Activated T-helper 1 cell treated with anti-CD3 and anti-CD28 coated beads, Interleukin-12 subunit alpha, Interleukin-12 subunit beta, Interleukin-2, Interleukin-4 antibody, amounts not matched to agents 30 ng/mL and 10 ng/mL and 1 ng/mL, durations not matched to agents 14 hours and 24 hours and 36 hours (primary cell): ENCODE measurements at regions of chr9 and their contacts with region 1.

Region 1: GRCh38 chr9:126965541-126966428 is 51.2 kb downstream of the RALGPS1 start:
- DNase-seq: peak; percentile 21
- H3K4me3 Mint-ChIP-seq: no peak overlapping the region
- H3K27ac Mint-ChIP-seq: no peak overlapping the region
- H3K4me1 Mint-ChIP-seq: peaks cover 17% of the 10 kb centered on the region
- H3K27me3 Mint-ChIP-seq: peaks cover 30% of the 10 kb centered on the region

Region 2: GRCh38 chr9:126781186-126782052 is 184.4 kb before region 1 on chr9:
- intact Hi-C with region 1: no loop called
- DNase-seq: peak; percentile 66
- H3K4me3 Mint-ChIP-seq: no peak overlapping the region
- H3K27ac Mint-ChIP-seq: no peak overlapping the region
- H3K4me1 Mint-ChIP-seq: no peaks in the 10 kb centered on the region
- H3K27me3 Mint-ChIP-seq: peaks cover 9% of the 10 kb centered on the region

Region 3: DNA sequence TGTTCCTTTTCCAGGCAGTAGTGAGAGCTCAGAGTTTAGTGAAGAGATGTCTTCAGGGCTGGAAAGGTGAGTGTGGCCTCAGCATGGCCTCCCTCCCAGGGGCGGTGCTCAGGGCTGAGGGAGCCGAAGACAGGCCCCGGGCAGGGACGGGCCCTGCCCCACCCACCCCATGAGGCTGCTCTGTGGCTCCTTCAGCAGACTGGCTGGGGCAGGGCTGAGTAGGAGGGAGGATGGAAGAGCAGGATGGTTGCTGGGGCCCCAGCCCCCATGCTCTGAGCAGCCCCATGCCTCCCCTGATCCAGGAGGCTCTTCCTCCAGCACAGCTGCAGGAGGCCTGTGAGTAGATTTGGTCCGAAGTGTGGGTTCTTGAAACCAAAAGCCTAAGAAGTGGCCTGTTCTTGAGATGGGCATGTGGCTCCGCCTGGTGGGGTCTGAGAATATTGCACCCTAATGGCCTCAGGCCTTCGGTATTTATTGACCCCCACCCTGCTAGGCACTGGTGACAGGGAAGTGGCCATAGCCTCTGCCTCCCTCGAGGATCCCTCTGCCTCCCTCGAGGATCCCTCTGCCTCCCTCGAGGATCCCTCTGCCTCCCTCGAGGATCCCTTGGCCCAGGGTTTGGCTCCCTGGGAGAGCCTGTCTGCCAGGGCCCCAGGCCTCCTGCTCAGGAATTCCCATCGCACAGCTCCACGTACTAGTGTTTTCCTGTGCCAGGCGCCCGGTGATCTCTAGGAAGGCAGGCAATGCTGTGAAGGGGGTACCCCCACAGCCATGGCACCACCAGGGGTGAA is 233.4 kb after region 1 on chr9:
- intact Hi-C with region 1: loop called (anchors 1 kb)
- DNase-seq: peak; percentile 65
- H3K4me3 Mint-ChIP-seq: no peak overlapping the region
- H3K27ac Mint-ChIP-seq: no peak overlapping the region
- H3K4me1 Mint-ChIP-seq: peaks cover 8% of the 10 kb centered on the region
- H3K27me3 Mint-ChIP-seq: peaks cover 7% of the 10 kb centered on the region

Region 4: GRCh38 chr9:127225814-127226625 is 260.2 kb after region 1 on chr9:
- intact Hi-C with region 1: no loop called
- DNase-seq: no peak
- H3K4me3 Mint-ChIP-seq: peak overlapping the region; percentile 82
- H3K27ac Mint-ChIP-seq: peak overlapping the region; percentile 79
- H3K4me1 Mint-ChIP-seq: peaks cover 18% of the 10 kb centered on the region
- H3K27me3 Mint-ChIP-seq: peaks cover 42% of the 10 kb centered on the region